AG04450 (cell line): ENCODE measurements at regions of chr5 and their contacts with region 1.

Region 1: GRCh38 chr5:140202610-140203009 is 27.6 kb downstream of the CYSTM1 start:
- DNase-seq: no peak
- H3K4me3 ChIP-seq: no peak overlapping the region
- H3K27ac ChIP-seq: no peak overlapping the region
- H3K27me3 ChIP-seq: no peaks in the 10 kb centered on the region
- CTCF ChIP-seq: no peak

Region 2: GRCh38 chr5:139872052-139872766 is 330.4 kb before region 1 on chr5:
- CTCF ChIA-PET with region 1: no interaction called
- POLR2A ChIA-PET with region 1: no interaction called
- DNase-seq: no peak
- H3K4me3 ChIP-seq: no peak overlapping the region
- H3K27ac ChIP-seq: no peak overlapping the region
- H3K27me3 ChIP-seq: peaks cover 34% of the 10 kb centered on the region
- CTCF ChIP-seq: no peak

Region 3: DNA sequence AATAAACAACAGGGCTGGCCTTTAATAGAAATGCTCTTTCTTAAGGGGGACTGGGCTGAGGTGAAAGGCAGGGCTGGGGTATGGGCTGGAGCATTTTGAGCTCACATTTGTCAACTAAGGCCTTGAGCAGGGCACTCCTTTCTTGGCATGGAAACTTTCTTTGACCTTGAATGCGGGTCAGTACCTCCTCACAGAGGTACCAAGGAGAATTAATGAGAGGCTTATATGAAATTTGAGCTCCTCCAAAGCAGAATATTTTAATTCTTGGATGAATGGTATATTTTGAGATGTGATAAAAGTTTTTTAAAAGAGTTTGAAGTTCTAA is 24.6 kb before region 1 on chr5:
- CTCF ChIA-PET with region 1: interaction called, 11 read pairs
- POLR2A ChIA-PET with region 1: interaction called, 4 read pairs
- DNase-seq: no peak
- H3K4me3 ChIP-seq: no peak overlapping the region
- H3K27ac ChIP-seq: no peak overlapping the region
- H3K27me3 ChIP-seq: no peaks in the 10 kb centered on the region
- CTCF ChIP-seq: no peak